ENCODE measurements at regions of chr9 and their contacts with region 1.

Region 1: GRCh38 chr9:69339620-69340019 is 14.6 kb downstream of the ENTREP1 start:
- DNase-seq: peak; percentile 17 to 36
- ATAC-seq: peak in 6 of 8 donors; percentile 45 to 79 (median 68)
- H3K4me3 ChIP-seq: no peak overlapping the region
- H3K27ac ChIP-seq: peak overlapping the region in 4 of 10 donors; percentile 7 to 47 (median 36)
- H3K4me1 ChIP-seq: peaks cover 0 to 30% (median 14%) of the 10 kb centered on the region in 9 donors
- H3K27me3 ChIP-seq: no peaks in the 10 kb centered on the region
- CTCF ChIP-seq: no peak

Region 2: DNA sequence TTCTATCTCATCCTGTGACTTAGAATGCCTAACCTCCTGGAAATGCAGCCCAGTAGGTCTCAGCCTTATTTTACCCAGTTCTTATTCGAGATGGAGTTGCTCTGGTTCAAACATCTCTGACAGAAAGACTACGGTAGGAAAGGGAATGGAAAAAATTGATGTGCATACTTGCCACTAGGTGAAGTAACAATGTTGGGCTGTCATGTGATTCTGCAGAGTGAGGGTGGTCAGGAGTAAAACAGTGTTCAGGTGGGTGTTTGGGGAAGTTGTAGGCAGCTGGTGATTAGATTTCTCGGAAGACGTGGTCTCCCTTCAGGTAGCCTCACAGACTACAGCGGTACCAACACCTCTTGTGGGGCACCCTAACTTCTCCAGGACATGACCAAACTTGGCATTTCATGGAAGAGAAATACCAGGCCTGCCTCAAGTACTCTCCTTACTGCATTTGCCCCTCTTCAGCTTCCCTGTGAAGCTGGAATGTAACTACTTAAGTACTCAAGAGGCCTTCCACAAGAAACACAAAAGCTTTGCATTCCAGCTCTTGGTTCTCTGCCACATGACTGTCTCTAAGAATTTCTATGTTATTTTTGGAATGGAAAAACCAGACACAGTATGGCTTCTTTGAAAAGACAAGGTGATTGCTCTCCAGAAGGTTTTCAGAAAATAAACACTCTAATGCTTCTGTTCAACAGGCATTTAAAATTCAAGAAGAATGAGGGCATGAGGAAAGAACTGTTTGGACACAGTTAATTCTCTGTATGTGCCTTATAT is 32.0 kb before region 1 on chr9:
- intact Hi-C with region 1: loop called in 1 of 10 experiments (anchors 5 kb)
- DNase-seq: no peak
- ATAC-seq: peak in 7 of 8 donors; percentile 39 to 77 (median 48)
- H3K4me3 ChIP-seq: no peak overlapping the region
- H3K27ac ChIP-seq: peak overlapping the region in 7 of 10 donors; percentile 7 to 84 (median 73)
- H3K4me1 ChIP-seq: peaks cover 0 to 12% (median 5%) of the 10 kb centered on the region in 9 donors
- H3K27me3 ChIP-seq: no peaks in the 10 kb centered on the region
- CTCF ChIP-seq: peak in 2 of 9 donors; percentile 5 to 31

Region 3: GRCh38 chr9:69370430-69370829 is 30.8 kb after region 1 on chr9:
- intact Hi-C with region 1: loop called in 2 of 10 experiments (anchors 1 to 5 kb)
- DNase-seq: no peak
- ATAC-seq: no peak
- H3K4me3 ChIP-seq: no peak overlapping the region
- H3K27ac ChIP-seq: peak overlapping the region in 2 of 10 donors; percentile 2 to 23
- H3K4me1 ChIP-seq: peaks cover 1 to 51% (median 22%) of the 10 kb centered on the region in 9 donors
- H3K27me3 ChIP-seq: no peaks in the 10 kb centered on the region
- CTCF ChIP-seq: no peak

Measured in heart right ventricle (tissue), 16 donors.